Pancreas (tissue), 10 donors: ENCODE measurements at regions of chr6 and their contacts with region 1.

Region 1: GRCh38 chr6:132218059-132218696 is 183.1 kb downstream of the MOXD1 start:
- DNase-seq: no peak
- ATAC-seq: peak in 3 of 4 donors; percentile 57 to 68 (median 57)
- H3K4me3 ChIP-seq: no peak overlapping the region
- H3K27ac ChIP-seq: no peak overlapping the region
- H3K4me1 ChIP-seq: no peaks in the 10 kb centered on the region
- H3K27me3 ChIP-seq: peaks cover 0 to 6% (median 0%) of the 10 kb centered on the region in 4 donors
- CTCF ChIP-seq: peak in 3 of 4 donors; percentile 15 to 45 (median 41)

Region 2: GRCh38 chr6:131914967-131915751 is 303.0 kb before region 1 on chr6:
- intact Hi-C with region 1: loop called in 2 of 3 experiments (anchors 5 to 10 kb)
- DNase-seq: peak in 4 of 6 donors; percentile 55 to 73 (median 57)
- ATAC-seq: peak; percentile 84 to 97 (median 94)
- H3K4me3 ChIP-seq: no peak overlapping the region
- H3K27ac ChIP-seq: no peak overlapping the region
- H3K4me1 ChIP-seq: no peaks in the 10 kb centered on the region
- H3K27me3 ChIP-seq: no peaks in the 10 kb centered on the region
- CTCF ChIP-seq: peak; percentile 55 to 83 (median 74)

Region 3: GRCh38 chr6:131923356-131923755 is 294.8 kb before region 1 on chr6:
- intact Hi-C with region 1: loop called in 2 of 3 experiments (anchors 5 to 10 kb)
- DNase-seq: peak in 4 of 6 donors; percentile 34 to 66 (median 56)
- ATAC-seq: peak; percentile 61 to 93 (median 79)
- H3K4me3 ChIP-seq: no peak overlapping the region
- H3K27ac ChIP-seq: no peak overlapping the region
- H3K4me1 ChIP-seq: no peaks in the 10 kb centered on the region
- H3K27me3 ChIP-seq: no peaks in the 10 kb centered on the region
- CTCF ChIP-seq: peak; percentile 36 to 51 (median 46)